ENCODE measurements at regions of chr12 and their contacts with region 1.

Region 1: DNA sequence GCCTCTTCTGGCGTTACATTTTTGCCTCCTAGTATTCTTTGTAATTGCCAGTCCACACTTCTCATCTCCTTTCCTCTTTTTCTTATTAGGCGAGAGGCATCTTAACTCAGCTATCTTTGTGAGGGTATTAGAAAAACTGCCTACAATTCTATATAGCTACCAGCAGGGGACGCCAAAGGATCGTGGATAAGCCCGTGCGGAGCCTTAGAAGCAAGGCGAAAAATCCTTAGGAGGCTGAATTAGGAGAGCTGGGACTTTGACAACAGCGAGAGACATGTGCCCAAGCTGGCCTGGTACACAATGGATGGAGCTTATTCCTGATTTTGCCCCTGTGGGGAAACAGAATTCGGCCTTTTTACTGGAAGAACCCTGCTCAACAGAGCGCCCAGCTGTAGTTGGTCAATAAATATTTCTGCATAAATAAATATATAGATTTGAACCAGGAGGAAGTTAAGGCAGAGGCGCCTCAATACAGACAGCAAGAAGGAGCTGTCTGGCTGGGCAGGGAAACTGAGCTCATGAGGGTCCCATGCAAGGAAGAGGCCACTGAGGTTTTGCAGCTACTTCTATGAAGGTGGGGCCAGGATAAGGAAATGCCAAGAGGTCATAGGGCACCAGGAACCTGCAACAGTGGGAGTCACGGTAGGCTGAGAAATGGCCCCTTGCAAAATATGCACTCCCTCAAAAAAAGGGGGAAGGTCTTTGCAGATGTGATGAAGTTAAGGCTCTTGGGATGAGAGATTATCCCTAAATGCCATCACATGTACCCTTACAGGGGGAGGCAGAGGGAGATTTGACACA is 14.6 kb upstream of the RBM19 start:
- DNase-seq: peak; percentile 62
- ATAC-seq: peak; percentile 69
- H3K4me3 Mint-ChIP-seq: no peak overlapping the region
- H3K27ac Mint-ChIP-seq: no peak overlapping the region
- H3K4me1 Mint-ChIP-seq: no peaks in the 10 kb centered on the region
- H3K27me3 Mint-ChIP-seq: peaks cover 10% of the 10 kb centered on the region

Region 2: GRCh38 chr12:113591480-113591974 is 389.2 kb before region 1 on chr12:
- CTCF ChIA-PET with region 1: no interaction called
- POLR2A ChIA-PET with region 1: no interaction called
- intact Hi-C with region 1: no loop called
- DNase-seq: peak; percentile 21
- ATAC-seq: no peak
- H3K4me3 Mint-ChIP-seq: no peak overlapping the region
- H3K27ac Mint-ChIP-seq: no peak overlapping the region
- H3K4me1 Mint-ChIP-seq: peaks cover 2% of the 10 kb centered on the region
- H3K27me3 Mint-ChIP-seq: peaks cover 46% of the 10 kb centered on the region

Region 3: GRCh38 chr12:114508529-114509129 is 527.9 kb after region 1 on chr12:
- CTCF ChIA-PET with region 1: interaction called, 40 read pairs
- POLR2A ChIA-PET with region 1: no interaction called
- intact Hi-C with region 1: loop called (anchors 1 kb)
- DNase-seq: peak; percentile 79
- ATAC-seq: peak; percentile 49
- H3K4me3 Mint-ChIP-seq: no peak overlapping the region
- H3K27ac Mint-ChIP-seq: no peak overlapping the region
- H3K4me1 Mint-ChIP-seq: peaks cover 3% of the 10 kb centered on the region
- H3K27me3 Mint-ChIP-seq: peaks cover 21% of the 10 kb centered on the region

Region 4: DNA sequence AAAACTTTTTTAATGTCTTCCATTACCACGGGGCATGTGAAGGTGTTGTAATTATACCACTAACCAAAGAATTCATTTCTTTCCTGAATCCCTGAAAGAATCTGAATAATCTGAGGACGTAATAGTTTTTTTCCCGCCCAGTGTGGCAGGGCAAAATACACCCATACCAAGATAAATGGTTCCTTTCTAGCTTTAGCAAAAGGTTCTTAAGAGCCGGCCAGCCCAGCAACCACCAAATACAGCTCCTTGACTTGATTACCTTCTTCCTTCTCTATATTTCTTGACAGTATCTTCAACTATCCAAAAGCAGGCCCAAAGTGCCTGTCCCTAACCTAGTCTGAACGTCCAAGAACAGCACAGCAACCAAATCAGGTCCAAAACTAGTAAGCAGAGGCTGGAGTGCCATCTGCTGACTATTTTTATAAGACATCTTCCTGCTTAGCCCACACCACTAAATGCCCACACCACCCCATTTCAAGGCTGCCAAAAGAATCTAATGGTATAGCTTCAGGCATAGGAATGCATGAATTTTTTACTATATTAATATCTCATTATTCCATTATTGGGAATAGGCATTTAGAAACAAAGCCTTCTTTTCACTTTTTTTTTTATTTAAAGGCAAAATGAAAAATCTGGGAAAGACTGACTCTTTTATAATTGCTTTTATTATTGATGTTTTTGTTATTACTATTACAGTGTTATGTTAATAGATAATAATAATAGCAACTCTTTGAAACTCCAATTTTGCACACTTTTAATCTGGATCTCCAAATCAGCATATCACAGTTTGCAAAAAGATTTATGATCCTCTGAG is 1772.4 kb after region 1 on chr12:
- CTCF ChIA-PET with region 1: no interaction called
- POLR2A ChIA-PET with region 1: no interaction called
- intact Hi-C with region 1: loop called in 1 of 2 experiments (anchors 2 kb)
- DNase-seq: peak; percentile 11
- ATAC-seq: no peak
- H3K4me3 Mint-ChIP-seq: no peak overlapping the region
- H3K27ac Mint-ChIP-seq: no peak overlapping the region
- H3K4me1 Mint-ChIP-seq: no peaks in the 10 kb centered on the region
- H3K27me3 Mint-ChIP-seq: peaks cover 15% of the 10 kb centered on the region

Region 5: GRCh38 chr12:115916910-115917668 is 1936.4 kb after region 1 on chr12:
- CTCF ChIA-PET with region 1: interaction called, 6 read pairs
- POLR2A ChIA-PET with region 1: no interaction called
- intact Hi-C with region 1: loop called (anchors 2 to 10 kb)
- DNase-seq: peak; percentile 83
- ATAC-seq: peak; percentile 85
- H3K4me3 Mint-ChIP-seq: peak overlapping the region; percentile 36
- H3K27ac Mint-ChIP-seq: no peak overlapping the region
- H3K4me1 Mint-ChIP-seq: peaks cover 3% of the 10 kb centered on the region
- H3K27me3 Mint-ChIP-seq: peaks cover 56% of the 10 kb centered on the region

Measured in activated CD4-positive, alpha-beta T cell treated with anti-CD3 and anti-CD28 coated beads for 36 hours (primary cell).